Left cardiac atrium (tissue), 4 donors: ENCODE measurements at regions of chr3 and their contacts with region 1.

Region 1: GRCh38 chr3:185561374-185561943 is 9.1 kb upstream of the LIPH start:
- DNase-seq: no peak
- ATAC-seq: peak in 1 of 2 donors; percentile 49

Region 2: DNA sequence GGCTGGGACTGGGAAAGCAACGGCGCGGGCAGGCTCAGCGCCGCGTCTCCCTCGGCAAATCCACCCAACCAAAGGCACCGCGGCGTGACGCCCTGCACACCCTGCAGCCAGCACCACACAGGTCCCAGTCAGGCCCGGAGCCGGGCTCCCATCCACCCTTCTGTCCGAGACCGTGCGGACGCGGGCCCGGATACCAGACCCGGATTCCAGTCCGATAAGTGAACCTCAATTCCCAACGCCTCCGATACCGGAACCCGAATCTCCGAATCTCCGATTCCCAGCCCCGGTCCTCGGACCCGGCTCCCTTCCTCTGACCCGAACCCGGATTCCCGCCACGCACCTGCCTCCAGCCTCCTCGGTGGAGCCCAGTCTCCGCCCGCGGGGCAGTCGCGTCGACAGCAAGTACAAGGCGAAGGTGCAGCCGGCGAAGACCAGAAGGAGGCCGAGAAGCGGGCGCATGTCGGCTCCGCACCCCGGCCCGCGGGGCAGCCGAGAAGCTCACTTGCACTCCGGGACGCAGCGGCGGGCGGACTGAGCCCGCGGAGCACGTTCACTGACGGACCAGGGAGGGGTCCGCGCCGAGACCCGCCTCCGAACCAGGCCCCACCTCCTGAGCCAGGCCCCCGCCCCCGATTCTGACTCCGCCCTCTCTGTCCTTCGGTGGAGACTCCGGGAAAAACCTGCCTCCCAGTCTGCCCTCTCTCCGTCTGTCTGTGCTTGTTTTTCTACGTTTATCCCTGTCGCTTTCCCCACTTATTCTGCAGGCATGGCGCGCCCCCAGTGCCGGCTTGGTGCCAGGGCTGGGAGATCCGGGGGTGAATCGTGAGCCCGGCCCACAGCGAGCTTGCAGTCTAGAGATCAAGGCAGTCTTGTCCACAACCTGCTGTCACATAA is 62.7 kb before region 1 on chr3 and contains the start of gene TMEM41A:
- intact Hi-C with region 1: loop called in 1 of 2 experiments (anchors 5 kb)
- DNase-seq: peak; percentile 95
- ATAC-seq: peak; percentile 99 to 100
- total RNA-seq, gene TMEM41A: 9.5 to 13.5 TPM

Region 3: GRCh38 chr3:185519021-185519420 is 42.4 kb before region 1 on chr3:
- intact Hi-C with region 1: no loop called
- DNase-seq: no peak
- ATAC-seq: no peak